ENCODE measurements at regions of chr6 and their contacts with region 1.

Region 1: GRCh38 chr6:14200047-14200446 is 82.5 kb downstream of the CD83 start:
- DNase-seq: peak; percentile 63
- H3K4me3 ChIP-seq: no peak overlapping the region
- H3K27ac ChIP-seq: no peak overlapping the region
- H3K4me1 ChIP-seq: no peaks in the 10 kb centered on the region
- H3K27me3 ChIP-seq: no peaks in the 10 kb centered on the region

Region 2: DNA sequence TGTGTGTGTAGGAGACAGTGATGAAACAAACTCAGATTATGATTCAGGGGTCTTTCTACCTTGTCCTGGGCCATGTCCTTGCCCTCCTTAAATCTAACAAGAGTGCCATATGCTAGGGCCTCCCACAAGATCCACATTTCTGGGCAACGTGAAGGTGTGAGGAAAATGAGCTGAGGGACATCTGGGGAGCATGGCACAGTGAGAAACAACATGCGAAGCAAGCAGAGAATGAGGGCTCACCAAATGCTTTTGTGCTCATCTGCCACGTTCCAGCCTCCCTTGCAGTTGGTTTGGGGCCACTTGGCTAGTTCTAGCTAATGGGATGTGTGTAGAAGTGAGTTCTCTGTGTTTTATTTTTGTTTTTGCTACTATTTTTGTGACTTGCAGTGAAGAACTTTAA is 296.7 kb before region 1 on chr6:
- in situ Hi-C with region 1: no loop called
- DNase-seq: no peak
- H3K4me3 ChIP-seq: no peak overlapping the region
- H3K27ac ChIP-seq: no peak overlapping the region
- H3K4me1 ChIP-seq: no peaks in the 10 kb centered on the region
- H3K27me3 ChIP-seq: peaks cover 43% of the 10 kb centered on the region

Region 3: DNA sequence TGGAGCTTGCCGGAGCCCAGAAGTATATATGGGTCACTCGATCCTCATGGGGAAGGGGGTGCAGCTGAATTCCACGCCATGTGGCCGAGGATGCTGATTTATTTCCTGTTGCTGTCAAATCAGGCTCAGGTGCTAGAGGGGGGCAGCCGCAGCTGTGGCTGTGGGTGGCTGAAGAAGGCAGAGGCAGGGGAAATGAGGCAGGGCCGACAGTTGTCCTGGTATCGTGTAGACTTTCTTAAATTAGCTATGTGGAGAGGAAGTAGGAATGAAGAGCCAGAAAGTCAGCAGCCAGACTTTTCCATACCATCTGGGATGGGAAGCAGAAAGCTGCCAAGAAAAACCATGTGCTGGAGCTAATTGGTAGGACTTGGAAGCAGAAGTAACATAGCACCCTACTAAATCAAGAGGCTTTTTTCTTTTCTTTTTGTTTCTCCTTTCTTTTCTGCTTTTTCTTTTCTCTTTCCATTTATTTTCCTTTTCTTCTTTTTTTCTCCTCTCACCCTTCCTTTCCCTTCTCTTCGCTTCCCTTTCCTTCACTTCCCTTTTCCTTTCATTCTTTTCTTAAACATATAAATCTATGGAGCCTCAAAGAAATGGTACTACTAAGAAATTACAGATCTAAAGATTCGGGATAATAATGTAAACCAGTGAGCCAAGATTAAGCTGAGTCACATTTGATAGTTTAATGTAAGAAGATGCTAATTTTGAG is 173.1 kb before region 1 on chr6:
- in situ Hi-C with region 1: no loop called
- DNase-seq: no peak
- H3K4me3 ChIP-seq: no peak overlapping the region
- H3K27ac ChIP-seq: no peak overlapping the region
- H3K4me1 ChIP-seq: peaks cover 6% of the 10 kb centered on the region; the same call in 1 of the 2 replicates
- H3K27me3 ChIP-seq: no peaks in the 10 kb centered on the region

Region 4: GRCh38 chr6:15239616-15240364 is 1039.7 kb after region 1 on chr6:
- in situ Hi-C with region 1: loop called (anchors 10 kb)
- DNase-seq: no peak
- H3K4me3 ChIP-seq: no peak overlapping the region
- H3K27ac ChIP-seq: no peak overlapping the region
- H3K4me1 ChIP-seq: no peaks in the 10 kb centered on the region
- H3K27me3 ChIP-seq: no peaks in the 10 kb centered on the region